ENCODE measurements at regions of chr6 and their contacts with region 1.

Region 1: GRCh38 chr6:30483677-30484279 is 5.5 kb upstream of the HLA-E start:
- DNase-seq: peak in 2 of 3 donors; percentile 66 to 70
- H3K4me3 ChIP-seq: no peak overlapping the region
- H3K4me3 Mint-ChIP-seq: peak overlapping the region in 1 of 2 donors; percentile 72
- H3K27ac ChIP-seq: no peak overlapping the region
- H3K27ac Mint-ChIP-seq: no peak overlapping the region
- H3K4me1 ChIP-seq: peaks cover 7 to 12% of the 10 kb centered on the region in 2 donors
- H3K4me1 Mint-ChIP-seq: peaks cover 25% of the 10 kb centered on the region
- H3K27me3 ChIP-seq: peaks cover 40 to 46% of the 10 kb centered on the region in 2 donors
- H3K27me3 Mint-ChIP-seq: peaks cover 43 to 52% (median 45%) of the 10 kb centered on the region in 3 donors
- CTCF ChIP-seq: peak; percentile 75

Region 2: GRCh38 chr6:30394139-30394538 is 89.6 kb before region 1 on chr6:
- intact Hi-C with region 1: no loop called
- DNase-seq: no peak
- H3K4me3 ChIP-seq: no peak overlapping the region
- H3K4me3 Mint-ChIP-seq: peak overlapping the region in 1 of 2 donors; percentile 47
- H3K27ac ChIP-seq: no peak overlapping the region
- H3K27ac Mint-ChIP-seq: no peak overlapping the region
- H3K4me1 ChIP-seq: no peaks in the 10 kb centered on the region
- H3K4me1 Mint-ChIP-seq: peaks cover 4% of the 10 kb centered on the region
- H3K27me3 ChIP-seq: peaks cover 37 to 78% of the 10 kb centered on the region in 2 donors
- H3K27me3 Mint-ChIP-seq: peaks cover 53 to 80% (median 61%) of the 10 kb centered on the region in 3 donors
- CTCF ChIP-seq: no peak

Region 3: DNA sequence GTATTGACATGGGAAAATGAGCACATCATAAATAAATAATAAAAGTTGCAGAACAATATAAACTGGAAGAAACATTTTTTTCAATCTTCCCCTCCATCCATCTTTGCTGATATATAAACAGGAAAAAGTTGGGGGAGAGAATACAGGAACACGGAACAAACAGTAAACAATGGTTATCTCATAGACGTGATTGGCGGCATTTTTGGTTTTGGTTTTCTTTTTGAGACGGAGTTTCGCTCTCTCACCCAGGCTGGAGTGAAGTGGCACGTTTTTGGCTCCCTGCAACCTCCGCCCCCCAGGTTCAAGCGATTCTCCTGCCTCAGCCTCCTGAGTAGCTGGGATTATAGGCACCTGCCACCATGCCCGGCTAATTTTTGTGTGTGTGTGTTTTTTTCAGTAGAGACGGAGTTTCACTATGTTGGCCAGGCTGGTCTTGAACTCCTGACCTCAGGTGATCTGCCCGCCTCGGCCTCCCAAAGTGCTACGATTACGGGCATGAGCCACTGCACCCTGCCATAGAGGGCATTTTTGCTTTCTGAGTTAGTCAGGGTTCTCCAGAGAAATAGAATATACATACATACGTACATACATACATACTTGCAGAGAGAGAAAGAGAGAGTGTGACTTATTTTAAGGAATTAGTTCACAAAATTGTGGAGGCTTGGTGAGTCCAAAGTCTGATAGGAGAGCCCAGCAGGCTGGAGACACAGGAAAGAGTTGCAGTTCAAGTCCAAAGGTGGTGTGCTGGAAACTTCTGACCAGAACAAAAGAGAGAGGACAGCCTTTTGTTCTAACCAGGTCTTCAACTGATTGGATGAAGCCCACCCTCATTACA is 49.9 kb after region 1 on chr6:
- intact Hi-C with region 1: loop called in 1 of 2 experiments (anchors 2 kb)
- DNase-seq: no peak
- H3K4me3 ChIP-seq: no peak overlapping the region
- H3K4me3 Mint-ChIP-seq: no peak overlapping the region
- H3K27ac ChIP-seq: no peak overlapping the region
- H3K27ac Mint-ChIP-seq: peak overlapping the region in 1 of 7 donors; percentile 18
- H3K4me1 ChIP-seq: peaks cover 29 to 32% of the 10 kb centered on the region in 2 donors
- H3K4me1 Mint-ChIP-seq: peaks cover 29% of the 10 kb centered on the region
- H3K27me3 ChIP-seq: no peaks in the 10 kb centered on the region
- H3K27me3 Mint-ChIP-seq: peaks cover 4 to 7% (median 4%) of the 10 kb centered on the region in 3 donors
- CTCF ChIP-seq: no peak

Region 4: DNA sequence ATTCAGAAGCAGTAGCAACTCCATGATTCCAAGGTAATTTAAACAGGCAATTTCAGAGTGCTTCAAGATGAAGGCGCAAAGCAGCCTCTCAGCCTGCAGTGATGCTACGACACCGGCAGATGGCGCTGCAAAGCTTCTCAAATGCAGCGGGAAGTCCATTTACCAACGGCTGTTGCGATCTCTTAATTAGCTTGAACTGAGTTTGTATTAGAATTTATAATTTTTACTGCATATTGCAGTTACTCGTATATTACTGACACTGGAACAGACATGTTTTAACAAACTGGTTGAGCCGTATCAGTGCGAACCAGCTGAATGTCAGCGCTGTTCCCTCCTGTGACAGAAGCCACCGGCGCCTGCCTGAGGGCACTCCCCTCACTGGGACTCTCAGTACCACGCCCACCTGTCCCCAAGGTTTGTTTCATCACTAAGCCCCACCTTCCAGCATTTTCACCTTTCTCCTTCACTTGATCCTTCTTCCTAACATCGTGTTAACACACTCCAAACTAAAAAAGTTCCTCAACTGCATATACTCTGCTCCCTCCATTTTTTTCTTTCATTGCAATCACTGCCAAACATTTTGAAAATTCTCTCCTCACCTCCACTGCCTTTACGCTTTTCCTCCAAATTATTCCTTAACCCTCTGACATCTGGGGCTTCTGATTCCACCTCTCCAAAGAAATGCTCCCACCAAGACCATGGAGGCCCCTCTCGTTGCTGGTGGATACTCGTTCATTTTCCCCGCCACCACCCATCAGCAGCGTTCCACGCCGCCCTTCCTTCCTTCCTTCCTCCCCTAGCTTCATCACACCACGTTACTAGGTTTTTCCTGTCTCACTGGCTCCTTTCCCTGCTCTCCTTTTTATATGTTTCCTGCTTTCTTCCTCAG is 58.0 kb after region 1 on chr6:
- intact Hi-C with region 1: loop called (anchors 2 to 5 kb)
- DNase-seq: peak; percentile 77 to 86 (median 83)
- H3K4me3 ChIP-seq: peak overlapping the region; percentile 10 to 69 (median 50)
- H3K4me3 Mint-ChIP-seq: peak overlapping the region; percentile 68 to 91
- H3K27ac ChIP-seq: no peak overlapping the region
- H3K27ac Mint-ChIP-seq: peak overlapping the region in 6 of 7 donors; percentile 23 to 68 (median 54)
- H3K4me1 ChIP-seq: peaks cover 13 to 18% of the 10 kb centered on the region in 2 donors
- H3K4me1 Mint-ChIP-seq: peaks cover 22% of the 10 kb centered on the region
- H3K27me3 ChIP-seq: peaks cover 13 to 14% of the 10 kb centered on the region in 2 donors
- H3K27me3 Mint-ChIP-seq: peaks cover 15 to 26% (median 22%) of the 10 kb centered on the region in 3 donors
- CTCF ChIP-seq: peak; percentile 98

Region 5: DNA sequence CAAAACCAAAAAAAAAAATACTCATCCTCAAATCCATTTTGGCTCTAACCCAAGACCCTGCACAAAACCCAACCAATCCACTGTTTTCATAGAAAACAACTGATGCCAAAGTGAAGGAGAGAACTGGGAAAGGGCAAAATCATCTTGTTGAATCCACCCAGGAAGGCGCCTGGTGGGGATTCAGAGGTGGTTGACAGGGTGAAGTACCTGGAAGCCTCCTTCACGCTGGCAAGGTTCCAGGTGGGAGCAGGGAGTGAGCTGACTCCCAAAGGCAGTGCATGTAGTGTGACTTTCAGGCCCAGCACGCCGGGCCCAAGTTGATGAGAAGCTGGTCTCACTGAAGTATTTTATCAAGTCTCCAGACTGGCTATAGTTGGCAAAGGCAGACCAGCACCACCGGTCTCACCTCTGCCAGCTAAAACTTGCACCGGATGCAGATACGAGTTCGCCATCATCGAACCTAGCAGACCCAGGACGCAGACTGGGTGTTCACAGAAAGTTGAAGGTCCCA is 116.7 kb after region 1 on chr6:
- intact Hi-C with region 1: loop called (anchors 1 to 5 kb)
- DNase-seq: no peak
- H3K4me3 ChIP-seq: no peak overlapping the region
- H3K4me3 Mint-ChIP-seq: no peak overlapping the region
- H3K27ac ChIP-seq: no peak overlapping the region
- H3K27ac Mint-ChIP-seq: peak overlapping the region in 2 of 7 donors; percentile 1 to 80
- H3K4me1 ChIP-seq: no peaks in the 10 kb centered on the region
- H3K4me1 Mint-ChIP-seq: peaks cover 4% of the 10 kb centered on the region
- H3K27me3 ChIP-seq: no peaks in the 10 kb centered on the region
- H3K27me3 Mint-ChIP-seq: no peaks in the 10 kb centered on the region
- CTCF ChIP-seq: no peak

Region 6: GRCh38 chr6:30672445-30673253 is 188.9 kb after region 1 on chr6 and contains the start of gene DHX16:
- intact Hi-C with region 1: loop called (anchors 2 to 5 kb)
- DNase-seq: peak; percentile 93 to 94 (median 94)
- H3K4me3 ChIP-seq: peak within 1 kb of the TSS; percentile 70 to 97 (median 96)
- H3K4me3 Mint-ChIP-seq: peak within 1 kb of the TSS; percentile 91 to 95
- H3K27ac ChIP-seq: peak within 1 kb of the TSS in 1 of 2 donors; percentile 74
- H3K27ac Mint-ChIP-seq: peak within 1 kb of the TSS; percentile 63 to 87 (median 77)
- H3K4me1 ChIP-seq: peaks cover 11 to 23% of the 10 kb centered on the region in 2 donors
- H3K4me1 Mint-ChIP-seq: peaks cover 33% of the 10 kb centered on the region
- H3K27me3 ChIP-seq: no peaks in the 10 kb centered on the region
- H3K27me3 Mint-ChIP-seq: no peaks in the 10 kb centered on the region
- CTCF ChIP-seq: peak; percentile 75
- polyA plus RNA-seq, gene DHX16: 16.4 to 70.1 (median 19.0) TPM

Region 7: DNA sequence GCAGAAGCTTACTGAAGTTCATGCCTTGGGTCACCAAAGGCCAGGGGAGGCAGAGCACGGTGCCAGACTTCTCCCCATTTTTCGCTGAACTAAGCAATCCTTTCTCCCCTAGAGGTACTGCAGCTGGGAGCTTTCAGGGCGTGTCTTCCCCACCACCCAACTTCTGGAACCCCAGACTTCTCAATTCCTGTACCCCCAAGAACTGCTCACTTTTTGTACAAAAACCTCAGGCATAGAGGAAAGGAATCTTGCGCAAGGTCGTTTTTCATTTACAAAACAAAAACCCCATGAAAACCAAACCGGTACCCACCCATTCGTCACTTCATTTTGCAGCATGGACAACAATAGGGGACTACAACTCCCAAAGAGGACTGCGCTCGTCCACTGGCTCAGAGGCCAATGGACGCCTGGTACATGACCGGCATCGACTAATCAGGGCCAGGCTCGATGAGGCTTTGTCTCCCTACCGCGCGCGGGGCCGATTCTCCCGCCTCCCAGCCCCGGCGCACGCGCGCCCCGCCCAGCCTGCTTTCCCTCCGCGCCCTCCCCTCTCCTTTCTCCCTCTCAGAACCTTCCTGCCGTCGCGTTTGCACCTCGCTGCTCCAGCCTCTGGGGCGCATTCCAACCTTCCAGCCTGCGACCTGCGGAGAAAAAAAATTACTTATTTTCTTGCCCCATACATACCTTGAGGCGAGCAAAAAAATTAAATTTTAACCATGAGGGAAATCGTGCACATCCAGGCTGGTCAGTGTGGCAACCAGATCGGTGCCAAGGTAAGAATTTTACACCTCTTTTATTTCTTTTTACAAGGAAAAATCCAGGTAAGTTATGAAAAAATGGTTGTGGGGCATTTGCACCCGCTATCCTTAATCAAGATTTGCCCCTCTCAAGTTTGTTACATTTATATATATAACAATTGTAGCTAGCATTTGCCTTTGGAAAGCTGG is 236.3 kb after region 1 on chr6 and contains the start of gene TUBB:
- intact Hi-C with region 1: loop called (anchors 5 to 10 kb)
- DNase-seq: peak; percentile 96 to 98 (median 96)
- H3K4me3 ChIP-seq: peak within 1 kb of the TSS; percentile 89 to 99 (median 99)
- H3K4me3 Mint-ChIP-seq: peak within 1 kb of the TSS; percentile 97 to 98
- H3K27ac ChIP-seq: peak within 1 kb of the TSS; percentile 78 to 85
- H3K27ac Mint-ChIP-seq: peak within 1 kb of the TSS; percentile 90 to 99 (median 97)
- H3K4me1 ChIP-seq: peaks cover 48 to 67% of the 10 kb centered on the region in 2 donors
- H3K4me1 Mint-ChIP-seq: peaks cover 51% of the 10 kb centered on the region
- H3K27me3 ChIP-seq: no peaks in the 10 kb centered on the region
- H3K27me3 Mint-ChIP-seq: no peaks in the 10 kb centered on the region
- CTCF ChIP-seq: no peak
- polyA plus RNA-seq, gene TUBB: 48.4 to 130 (median 57.0) TPM

Region 8: DNA sequence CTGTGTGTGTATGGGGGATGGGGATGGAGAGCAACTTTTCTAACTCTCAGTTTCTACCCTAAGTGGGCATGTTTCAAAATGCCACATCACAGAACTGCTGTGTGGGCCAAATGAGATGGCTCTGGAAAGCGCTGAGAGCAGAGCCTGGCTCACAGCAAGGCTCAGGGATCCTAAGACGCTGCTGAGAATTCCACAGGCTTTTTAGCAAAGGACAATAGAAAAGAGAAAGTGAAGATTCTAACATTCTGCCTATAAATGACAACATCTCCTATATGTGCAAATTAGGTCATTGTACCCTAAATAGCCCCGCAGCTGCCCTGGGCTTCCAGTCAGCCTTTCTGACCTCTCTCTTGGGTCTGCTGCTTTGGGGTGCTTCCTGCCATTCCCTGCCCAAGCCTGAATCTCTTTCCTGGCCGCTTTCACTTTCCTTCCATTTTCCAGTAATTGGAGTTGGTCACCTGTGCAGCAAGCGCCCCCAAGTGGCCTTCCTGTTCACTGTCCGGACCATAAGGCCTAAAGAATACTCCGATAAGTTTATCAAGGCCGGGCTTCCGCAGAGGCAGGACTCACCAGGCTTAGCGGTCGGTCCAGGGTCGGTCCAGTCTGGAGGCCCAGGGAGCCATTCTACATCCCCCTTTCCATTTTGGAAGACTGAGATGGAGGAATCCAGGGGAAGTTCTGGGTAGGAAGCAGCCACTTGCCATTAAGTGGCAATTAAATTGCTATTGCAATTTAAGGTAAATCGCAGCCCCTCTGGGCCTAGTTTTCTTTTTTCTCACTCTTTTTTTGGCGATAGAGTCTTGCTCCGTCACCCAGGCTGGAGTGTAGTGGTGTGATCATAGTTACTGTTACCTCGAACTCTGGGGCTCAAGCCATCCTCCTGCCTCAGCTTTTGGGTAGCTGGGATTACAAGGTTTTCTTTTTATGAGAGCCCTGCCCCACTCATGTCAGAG is 393.9 kb after region 1 on chr6:
- intact Hi-C with region 1: no loop called
- DNase-seq: peak; percentile 72 to 84 (median 82)
- H3K4me3 ChIP-seq: peak overlapping the region; percentile 15 to 73 (median 38)
- H3K4me3 Mint-ChIP-seq: peak overlapping the region; percentile 84 to 94
- H3K27ac ChIP-seq: peak overlapping the region in 1 of 2 donors; percentile 46
- H3K27ac Mint-ChIP-seq: peak overlapping the region in 6 of 7 donors; percentile 39 to 86 (median 70)
- H3K4me1 ChIP-seq: peaks cover 9 to 10% of the 10 kb centered on the region in 2 donors
- H3K4me1 Mint-ChIP-seq: peaks cover 8% of the 10 kb centered on the region
- H3K27me3 ChIP-seq: peaks cover 0 to 18% of the 10 kb centered on the region in 2 donors
- H3K27me3 Mint-ChIP-seq: peaks cover 12 to 20% (median 14%) of the 10 kb centered on the region in 3 donors
- CTCF ChIP-seq: peak; percentile 89

Measured in CD14-positive monocyte (primary cell).